A549 (cell line): ENCODE measurements at regions of chr1 and their contacts with region 1.

Region 1: GRCh38 chr1:214328770-214329469 is 48.0 kb downstream of the SMYD2 start:
- DNase-seq: peak; percentile 73 to 74
- ATAC-seq: peak; percentile 81 to 89
- H3K4me3 ChIP-seq: no peak overlapping the region
- H3K27ac ChIP-seq: no peak overlapping the region
- H3K4me1 ChIP-seq: no peaks in the 10 kb centered on the region
- CTCF ChIP-seq: peak; percentile 93
- EP300 ChIP-seq: no peak
- POLR2A ChIP-seq: no peak
- RAD21 ChIP-seq: peak; percentile 94 to 97

Region 2: GRCh38 chr1:213793482-213794067 is 535.3 kb before region 1 on chr1:
- CTCF ChIA-PET with region 1: no interaction called
- POLR2A ChIA-PET with region 1: no interaction called
- DNase-seq: no peak
- ATAC-seq: no peak
- H3K4me3 ChIP-seq: no peak overlapping the region
- H3K27ac ChIP-seq: no peak overlapping the region
- H3K4me1 ChIP-seq: no peaks in the 10 kb centered on the region
- CTCF ChIP-seq: no peak
- EP300 ChIP-seq: no peak
- POLR2A ChIP-seq: no peak
- RAD21 ChIP-seq: no peak

Region 3: GRCh38 chr1:214101246-214101645 is 227.7 kb before region 1 on chr1:
- CTCF ChIA-PET with region 1: no interaction called
- POLR2A ChIA-PET with region 1: no interaction called
- DNase-seq: no peak
- ATAC-seq: no peak
- H3K4me3 ChIP-seq: no peak overlapping the region
- H3K27ac ChIP-seq: no peak overlapping the region
- H3K4me1 ChIP-seq: peaks cover 14% of the 10 kb centered on the region; the same call in 1 of the 3 replicates
- CTCF ChIP-seq: no peak
- EP300 ChIP-seq: no peak
- POLR2A ChIP-seq: no peak
- RAD21 ChIP-seq: no peak

Region 4: DNA sequence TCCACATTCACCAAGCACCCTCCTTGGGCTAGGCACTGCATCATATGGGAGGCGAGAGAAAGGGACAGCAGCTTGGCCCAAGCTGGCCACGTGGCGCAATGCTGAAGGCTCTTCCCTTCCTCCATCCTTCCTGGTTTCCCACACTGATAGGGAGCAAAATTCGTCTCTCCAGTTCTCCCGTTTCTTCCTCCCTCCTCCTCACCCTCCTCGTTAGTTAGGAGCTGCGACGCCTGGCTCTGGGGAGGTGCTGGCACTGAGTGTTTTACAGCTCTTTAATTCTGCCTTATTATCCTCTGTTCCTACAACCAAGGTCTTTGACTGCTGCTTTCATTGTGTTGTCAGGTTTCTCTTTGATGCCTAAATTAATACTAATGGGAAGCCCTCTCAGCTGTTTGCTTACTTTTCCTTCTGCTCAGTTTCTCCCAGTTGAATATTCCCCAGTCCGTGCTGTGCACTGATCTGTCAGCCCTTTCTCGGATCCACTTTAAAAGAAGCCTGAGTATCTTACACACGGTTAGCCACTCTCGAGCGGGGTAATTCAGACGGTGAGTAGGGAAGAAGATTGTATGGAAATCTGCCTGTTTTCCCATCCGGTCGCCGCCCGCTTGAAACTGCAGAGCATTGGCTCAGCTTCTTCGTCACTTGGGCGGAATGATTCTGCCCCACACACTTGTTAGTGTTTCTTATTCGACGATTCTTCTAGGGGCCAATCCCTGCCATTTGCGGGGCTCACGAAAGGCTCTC is 104.1 kb before region 1 on chr1:
- CTCF ChIA-PET with region 1: interaction called, 324 read pairs
- POLR2A ChIA-PET with region 1: no interaction called
- DNase-seq: no peak
- ATAC-seq: no peak
- H3K4me3 ChIP-seq: no peak overlapping the region
- H3K27ac ChIP-seq: no peak overlapping the region
- H3K4me1 ChIP-seq: peaks cover 12% of the 10 kb centered on the region
- CTCF ChIP-seq: no peak
- EP300 ChIP-seq: no peak
- POLR2A ChIP-seq: no peak
- RAD21 ChIP-seq: no peak

Region 5: DNA sequence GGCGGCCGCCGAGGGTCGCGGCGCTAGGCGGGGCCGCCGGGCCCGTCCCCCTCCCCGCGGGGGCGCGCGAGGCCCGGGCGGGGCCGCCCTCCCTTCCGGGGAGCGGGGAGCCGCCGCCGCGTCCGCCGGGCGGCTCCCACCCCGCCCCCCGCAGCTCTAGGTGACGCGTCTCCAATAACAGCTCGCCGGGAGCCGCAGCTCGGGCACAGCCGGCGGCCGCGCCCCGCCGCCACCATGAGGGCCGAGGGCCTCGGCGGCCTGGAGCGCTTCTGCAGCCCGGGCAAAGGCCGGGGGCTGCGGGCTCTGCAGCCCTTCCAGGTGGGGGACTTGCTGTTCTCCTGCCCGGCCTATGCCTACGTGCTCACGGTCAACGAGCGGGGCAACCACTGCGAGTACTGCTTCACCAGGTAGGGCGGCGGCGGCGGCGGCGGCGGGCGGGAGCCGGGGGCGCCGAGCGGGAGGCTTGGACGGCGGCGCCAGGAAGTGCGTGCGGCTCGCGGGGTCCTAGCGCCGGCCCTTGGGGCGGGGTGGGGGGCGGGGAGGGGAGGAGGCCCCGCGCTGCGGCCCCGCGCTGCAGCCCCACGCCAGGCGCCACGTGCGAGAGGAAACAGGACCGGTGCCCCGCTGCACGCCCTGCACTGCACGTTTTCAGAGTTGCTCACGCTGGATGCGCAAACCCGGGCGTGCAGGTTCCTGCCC is 47.8 kb before region 1 on chr1 and contains the start of gene SMYD2:
- CTCF ChIA-PET with region 1: interaction called, 43 read pairs
- POLR2A ChIA-PET with region 1: no interaction called
- DNase-seq: peak; percentile 53 to 66
- ATAC-seq: peak; percentile 83 to 86
- H3K4me3 ChIP-seq: peak within 1 kb of the TSS; percentile 90
- H3K27ac ChIP-seq: peak within 1 kb of the TSS; percentile 98 to 99
- H3K4me1 ChIP-seq: peaks cover 22% of the 10 kb centered on the region
- CTCF ChIP-seq: no peak
- EP300 ChIP-seq: no peak
- POLR2A ChIP-seq: peak; percentile 36
- RAD21 ChIP-seq: no peak
- polyA plus RNA-seq, gene SMYD2: 54.9 and 57.7 TPM in 2 replicates

Region 6: DNA sequence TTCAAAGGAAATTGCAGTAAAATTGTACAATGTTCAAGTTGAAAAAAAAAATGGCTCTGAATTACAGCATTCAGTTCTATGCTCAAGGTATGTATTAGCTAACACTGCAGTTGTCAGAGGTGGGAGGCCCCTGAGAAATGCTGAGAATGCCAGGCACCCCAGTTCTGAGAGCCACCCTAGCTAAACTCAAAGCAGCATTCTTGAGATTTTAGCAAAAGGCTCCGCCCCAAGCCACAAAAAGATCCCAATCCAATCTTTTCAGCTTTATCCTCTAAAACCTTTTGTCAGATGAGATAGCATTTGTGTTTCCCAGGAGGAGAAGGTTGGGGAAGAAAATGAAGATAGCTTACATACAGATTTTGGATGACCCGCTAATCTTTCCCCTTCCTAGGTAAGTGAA is 20.9 kb after region 1 on chr1:
- CTCF ChIA-PET with region 1: interaction called, 42 read pairs
- POLR2A ChIA-PET with region 1: no interaction called
- DNase-seq: no peak
- ATAC-seq: no peak
- H3K4me3 ChIP-seq: no peak overlapping the region
- H3K27ac ChIP-seq: no peak overlapping the region
- H3K4me1 ChIP-seq: 0 out of 3 replicates have a peak, but pooled peaks cover 5% of the 10 kb centered on the region
- CTCF ChIP-seq: no peak
- EP300 ChIP-seq: no peak
- POLR2A ChIP-seq: no peak
- RAD21 ChIP-seq: no peak

Region 7: GRCh38 chr1:214584805-214585766 is 256.2 kb after region 1 on chr1:
- CTCF ChIA-PET with region 1: interaction called, 515 read pairs
- POLR2A ChIA-PET with region 1: interaction called, 5 read pairs
- DNase-seq: peak; percentile 41 to 58
- ATAC-seq: peak; percentile 83 to 89
- H3K4me3 ChIP-seq: no peak overlapping the region
- H3K27ac ChIP-seq: peak overlapping the region; percentile 31 to 74; a peak in 4 of 6 replicates
- H3K4me1 ChIP-seq: peaks cover 38% of the 10 kb centered on the region
- CTCF ChIP-seq: peak; percentile 97
- EP300 ChIP-seq: no peak
- POLR2A ChIP-seq: no peak
- RAD21 ChIP-seq: peak; percentile 97

Region 8: GRCh38 chr1:214637722-214638458 is 309.0 kb after region 1 on chr1:
- CTCF ChIA-PET with region 1: interaction called, 16 read pairs
- POLR2A ChIA-PET with region 1: no interaction called
- DNase-seq: peak; percentile 43 to 58
- ATAC-seq: peak; percentile 72 to 84; a peak in 4 of 6 replicates
- H3K4me3 ChIP-seq: no peak overlapping the region
- H3K27ac ChIP-seq: no peak overlapping the region
- H3K4me1 ChIP-seq: no peaks in the 10 kb centered on the region
- CTCF ChIP-seq: peak; percentile 78
- EP300 ChIP-seq: no peak
- POLR2A ChIP-seq: no peak
- RAD21 ChIP-seq: peak; percentile 58 to 61